Caco-2 (cell line): ENCODE measurements at regions of chr12 and their contacts with region 1.

Region 1: DNA sequence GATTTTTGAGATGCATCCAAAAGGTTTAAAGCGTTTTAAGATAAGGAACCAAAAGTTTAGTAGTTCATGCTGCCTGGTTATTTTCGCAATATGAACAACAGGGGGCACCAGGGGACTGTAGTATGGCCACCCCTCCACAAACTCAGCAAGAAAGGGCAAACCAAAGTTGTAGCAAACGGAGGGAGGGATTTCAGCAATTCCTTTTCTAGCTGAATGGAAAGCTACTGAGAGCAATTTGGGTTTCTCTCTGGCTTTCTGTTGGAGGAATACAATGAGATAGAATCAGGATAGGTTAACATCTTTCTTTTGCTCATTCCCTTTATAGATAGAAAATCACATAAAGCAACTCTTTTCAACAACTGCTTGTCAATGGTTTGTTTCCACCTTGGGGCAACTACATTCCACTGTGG is 62.5 kb downstream of the DRAM1 start:
- DNase-seq: peak; percentile 67 to 80
- H3K4me3 ChIP-seq: no peak overlapping the region
- H3K4me3 Mint-ChIP-seq: peak overlapping the region; percentile 30
- H3K27ac Mint-ChIP-seq: peak overlapping the region; percentile 76
- H3K4me1 ChIP-seq: peaks cover 15% of the 10 kb centered on the region
- H3K4me1 Mint-ChIP-seq: no peaks in the 10 kb centered on the region
- H3K27me3 ChIP-seq: no peaks in the 10 kb centered on the region
- H3K27me3 Mint-ChIP-seq: no peaks in the 10 kb centered on the region
- CTCF ChIP-seq: peak; percentile 76 to 81

Region 2: DNA sequence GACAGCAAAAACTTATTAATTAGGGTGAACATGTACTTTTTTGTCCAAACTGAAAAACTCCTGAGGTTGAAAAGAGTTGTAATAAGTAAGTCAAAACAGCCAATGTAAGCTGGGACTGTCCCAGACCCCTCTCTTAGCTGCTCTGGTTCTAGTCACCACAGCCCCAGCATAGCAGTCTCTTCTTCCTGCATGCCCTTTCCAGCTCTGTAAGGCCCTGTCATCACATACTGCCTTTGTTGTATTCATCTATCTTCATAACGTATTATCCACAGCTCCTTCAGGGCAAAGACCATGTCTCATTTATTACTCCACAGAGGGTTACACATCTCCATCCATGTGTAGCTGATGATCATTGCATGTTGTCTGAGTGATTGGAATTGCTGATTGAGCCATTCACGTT is 603.4 kb before region 1 on chr12:
- CTCF ChIA-PET with region 1: no interaction called
- POLR2A ChIA-PET with region 1: no interaction called
- intact Hi-C with region 1: no loop called
- DNase-seq: no peak
- H3K4me3 ChIP-seq: no peak overlapping the region
- H3K4me3 Mint-ChIP-seq: no peak overlapping the region
- H3K27ac Mint-ChIP-seq: no peak overlapping the region
- H3K4me1 ChIP-seq: no peaks in the 10 kb centered on the region
- H3K4me1 Mint-ChIP-seq: no peaks in the 10 kb centered on the region
- H3K27me3 ChIP-seq: no peaks in the 10 kb centered on the region
- H3K27me3 Mint-ChIP-seq: no peaks in the 10 kb centered on the region
- CTCF ChIP-seq: no peak

Region 3: GRCh38 chr12:102061560-102062418 is 121.9 kb after region 1 on chr12 and contains the start of gene WASHC3:
- CTCF ChIA-PET with region 1: interaction called, 7 read pairs
- POLR2A ChIA-PET with region 1: no interaction called
- intact Hi-C with region 1: loop called (anchors 1 kb)
- DNase-seq: peak; percentile 93 to 94
- H3K4me3 ChIP-seq: peak within 1 kb of the TSS; percentile 46
- H3K4me3 Mint-ChIP-seq: peak within 1 kb of the TSS; percentile 99
- H3K27ac Mint-ChIP-seq: peak within 1 kb of the TSS; percentile 94
- H3K4me1 ChIP-seq: peaks cover 20% of the 10 kb centered on the region
- H3K4me1 Mint-ChIP-seq: peaks cover 8% of the 10 kb centered on the region
- H3K27me3 ChIP-seq: no peaks in the 10 kb centered on the region
- H3K27me3 Mint-ChIP-seq: no peaks in the 10 kb centered on the region
- CTCF ChIP-seq: no peak
- total RNA-seq, gene WASHC3: 40.4 and 43.2 TPM in 2 replicates

Region 4: DNA sequence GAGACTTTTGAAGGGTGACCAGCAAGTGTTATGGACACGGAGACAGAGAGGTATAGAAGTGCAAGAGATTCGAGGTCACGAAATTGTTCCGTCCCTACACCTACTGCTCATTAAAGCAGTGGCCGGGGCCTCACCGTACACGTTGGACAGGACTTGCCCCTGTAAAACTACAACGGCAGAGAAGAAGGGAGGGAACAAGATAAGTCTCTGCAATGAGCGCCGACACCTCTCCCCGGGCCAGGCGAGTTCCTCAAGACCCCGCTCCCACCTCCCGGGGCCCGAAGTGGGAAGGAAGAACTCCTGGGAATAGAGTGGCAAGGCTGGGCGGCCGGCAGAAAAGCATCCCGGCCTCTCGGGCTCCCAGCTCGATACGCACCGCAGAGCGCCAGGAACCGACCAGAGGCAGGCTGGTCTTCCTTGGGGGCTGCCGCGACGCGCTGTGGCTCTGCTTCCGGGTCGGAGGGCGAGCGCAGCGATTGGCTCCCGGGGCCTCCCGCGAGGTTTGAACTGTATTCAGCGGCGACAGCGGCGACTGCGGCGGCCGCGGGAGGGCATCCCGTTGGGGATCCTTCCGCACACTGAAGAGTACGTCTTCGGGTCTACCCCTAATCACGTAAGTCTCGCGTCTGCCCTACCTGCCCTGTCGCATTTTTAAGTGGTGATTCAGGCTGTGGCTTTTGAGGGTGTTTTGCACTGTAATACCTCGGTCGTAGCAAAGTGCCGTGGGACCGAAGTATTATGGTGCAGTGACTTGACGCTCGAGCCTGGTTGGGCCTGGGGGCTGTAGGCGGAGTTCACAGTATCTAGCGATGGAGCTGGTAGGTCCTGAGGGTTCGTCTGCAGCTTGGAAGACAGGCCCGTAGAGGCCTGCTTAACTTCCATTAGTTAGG is 180.1 kb after region 1 on chr12 and contains the starts of genes NUP37 and PARPBP:
- CTCF ChIA-PET with region 1: no interaction called
- POLR2A ChIA-PET with region 1: no interaction called
- intact Hi-C with region 1: loop called (anchors 1 kb)
- DNase-seq: peak; percentile 94 to 95
- H3K4me3 ChIP-seq: peak within 1 kb of the TSS; percentile 55
- H3K4me3 Mint-ChIP-seq: peak within 1 kb of the TSS; percentile 90
- H3K27ac Mint-ChIP-seq: peak within 1 kb of the TSS; percentile 49
- H3K4me1 ChIP-seq: peaks cover 3% of the 10 kb centered on the region; the same call in 1 of the 2 replicates
- H3K4me1 Mint-ChIP-seq: no peaks in the 10 kb centered on the region
- H3K27me3 ChIP-seq: no peaks in the 10 kb centered on the region
- H3K27me3 Mint-ChIP-seq: no peaks in the 10 kb centered on the region
- CTCF ChIP-seq: no peak
- total RNA-seq, gene NUP37: 78.9 and 87.4 TPM in 2 replicates
- total RNA-seq, gene PARPBP: 28.2 and 30.4 TPM in 2 replicates

Region 5: GRCh38 chr12:102300824-102301461 is 361.1 kb after region 1 on chr12:
- CTCF ChIA-PET with region 1: no interaction called
- POLR2A ChIA-PET with region 1: no interaction called
- intact Hi-C with region 1: loop called (anchors 5 kb)
- DNase-seq: peak; percentile 37 to 41
- H3K4me3 ChIP-seq: no peak overlapping the region
- H3K4me3 Mint-ChIP-seq: no peak overlapping the region
- H3K27ac Mint-ChIP-seq: no peak overlapping the region
- H3K4me1 ChIP-seq: no peaks in the 10 kb centered on the region
- H3K4me1 Mint-ChIP-seq: no peaks in the 10 kb centered on the region
- H3K27me3 ChIP-seq: no peaks in the 10 kb centered on the region
- H3K27me3 Mint-ChIP-seq: peaks cover 3% of the 10 kb centered on the region
- CTCF ChIP-seq: peak; percentile 22 to 48

Region 6: GRCh38 chr12:102702447-102703114 is 762.7 kb after region 1 on chr12:
- CTCF ChIA-PET with region 1: interaction called, 3 read pairs
- POLR2A ChIA-PET with region 1: no interaction called
- intact Hi-C with region 1: loop called (anchors 1 kb)
- DNase-seq: peak; percentile 51 to 60
- H3K4me3 ChIP-seq: no peak overlapping the region
- H3K4me3 Mint-ChIP-seq: no peak overlapping the region
- H3K27ac Mint-ChIP-seq: no peak overlapping the region
- H3K4me1 ChIP-seq: no peaks in the 10 kb centered on the region
- H3K4me1 Mint-ChIP-seq: no peaks in the 10 kb centered on the region
- H3K27me3 ChIP-seq: no peaks in the 10 kb centered on the region
- H3K27me3 Mint-ChIP-seq: peaks cover 15% of the 10 kb centered on the region
- CTCF ChIP-seq: peak; percentile 66 to 72

Region 7: GRCh38 chr12:102769319-102769916 is 829.6 kb after region 1 on chr12:
- CTCF ChIA-PET with region 1: interaction called, 3 read pairs
- POLR2A ChIA-PET with region 1: no interaction called
- intact Hi-C with region 1: loop called (anchors 1 kb)
- DNase-seq: peak; percentile 49 to 64
- H3K4me3 ChIP-seq: no peak overlapping the region
- H3K4me3 Mint-ChIP-seq: no peak overlapping the region
- H3K27ac Mint-ChIP-seq: no peak overlapping the region
- H3K4me1 ChIP-seq: no peaks in the 10 kb centered on the region
- H3K4me1 Mint-ChIP-seq: no peaks in the 10 kb centered on the region
- H3K27me3 ChIP-seq: no peaks in the 10 kb centered on the region
- H3K27me3 Mint-ChIP-seq: peaks cover 7% of the 10 kb centered on the region
- CTCF ChIP-seq: peak; percentile 73 to 77